B cell (primary cell): ENCODE measurements at regions of chr18 and their contacts with region 1.

Region 1: GRCh38 chr18:62714671-62715435 is 488 bp upstream of the PHLPP1 start:
- DNase-seq: peak; percentile 96
- ATAC-seq: peak; percentile 81
- H3K4me3 ChIP-seq: peak overlapping the region; percentile 6 to 85 (median 75)
- H3K4me3 Mint-ChIP-seq: peak overlapping the region; percentile 95
- H3K27ac ChIP-seq: peak overlapping the region; percentile 85 to 92
- H3K27ac Mint-ChIP-seq: peak overlapping the region; percentile 97
- H3K4me1 ChIP-seq: peaks cover 15 to 18% of the 10 kb centered on the region in 2 donors
- H3K4me1 Mint-ChIP-seq: peaks cover 34% of the 10 kb centered on the region
- H3K27me3 ChIP-seq: no peaks in the 10 kb centered on the region
- H3K27me3 Mint-ChIP-seq: no peaks in the 10 kb centered on the region
- CTCF ChIP-seq: peak; percentile 77

Region 2: DNA sequence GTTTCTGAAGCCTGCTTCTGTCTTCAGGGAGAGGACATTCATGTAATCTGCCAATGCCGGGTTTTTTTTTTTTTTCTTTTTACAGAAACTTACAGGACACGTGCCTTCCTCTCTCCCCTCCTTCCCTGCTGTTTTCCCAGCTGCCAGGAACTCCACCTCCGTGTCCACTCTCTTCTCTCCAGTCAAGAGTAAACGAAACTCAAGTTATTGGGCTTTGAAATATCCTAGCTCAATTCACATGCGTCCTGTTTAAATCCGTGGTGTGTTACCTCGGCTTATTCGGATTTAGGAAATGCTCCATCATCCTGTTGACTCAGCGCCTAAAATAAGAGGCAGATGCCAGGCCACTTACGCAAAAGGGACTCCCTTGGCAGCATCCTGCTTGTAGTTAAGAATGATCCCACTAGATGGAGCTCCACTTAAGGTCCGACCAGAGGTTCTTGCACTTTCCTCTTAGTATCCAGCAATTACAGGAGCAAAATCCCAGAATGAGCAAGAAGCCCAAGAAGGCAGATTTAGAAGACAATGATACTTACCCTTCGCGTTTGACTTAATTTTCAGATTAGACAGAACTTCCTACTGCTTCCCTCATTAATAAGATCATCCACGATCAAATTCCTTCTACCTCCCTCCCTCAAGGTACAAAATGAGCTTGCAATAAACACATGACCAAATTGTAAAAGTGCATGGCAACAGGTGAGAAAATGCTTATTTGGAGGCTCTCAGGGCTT is 289.2 kb before region 1 on chr18:
- CTCF ChIA-PET with region 1: interaction called, 4 read pairs
- POLR2A ChIA-PET with region 1: no interaction called
- intact Hi-C with region 1: loop called (anchors 2 kb)
- DNase-seq: peak; percentile 78
- ATAC-seq: peak; percentile 69
- H3K4me3 ChIP-seq: no peak overlapping the region
- H3K4me3 Mint-ChIP-seq: peak overlapping the region; percentile 29
- H3K27ac ChIP-seq: no peak overlapping the region
- H3K27ac Mint-ChIP-seq: no peak overlapping the region
- H3K4me1 ChIP-seq: peaks cover 5 to 8% of the 10 kb centered on the region in 2 donors
- H3K4me1 Mint-ChIP-seq: peaks cover 7% of the 10 kb centered on the region
- H3K27me3 ChIP-seq: peaks cover 0 to 3% (median 0%) of the 10 kb centered on the region in 4 experiments
- H3K27me3 Mint-ChIP-seq: peaks cover 9% of the 10 kb centered on the region
- CTCF ChIP-seq: peak; percentile 88

Region 3: GRCh38 chr18:62584241-62585120 is 130.4 kb before region 1 on chr18:
- CTCF ChIA-PET with region 1: interaction called, 3 read pairs
- POLR2A ChIA-PET with region 1: interaction called, 3 read pairs
- intact Hi-C with region 1: loop called (anchors 10 kb)
- DNase-seq: peak; percentile 88
- ATAC-seq: peak; percentile 94
- H3K4me3 ChIP-seq: no peak overlapping the region
- H3K4me3 Mint-ChIP-seq: peak overlapping the region; percentile 35
- H3K27ac ChIP-seq: no peak overlapping the region
- H3K27ac Mint-ChIP-seq: peak overlapping the region; percentile 11
- H3K4me1 ChIP-seq: peaks cover 13 to 20% of the 10 kb centered on the region in 2 donors
- H3K4me1 Mint-ChIP-seq: peaks cover 16% of the 10 kb centered on the region
- H3K27me3 ChIP-seq: no peaks in the 10 kb centered on the region
- H3K27me3 Mint-ChIP-seq: no peaks in the 10 kb centered on the region
- CTCF ChIP-seq: peak; percentile 94

Region 4: GRCh38 chr18:62637807-62638687 is 76.8 kb before region 1 on chr18:
- CTCF ChIA-PET with region 1: no interaction called
- POLR2A ChIA-PET with region 1: no interaction called
- intact Hi-C with region 1: no loop called
- DNase-seq: peak; percentile 60
- ATAC-seq: peak; percentile 53
- H3K4me3 ChIP-seq: no peak overlapping the region
- H3K4me3 Mint-ChIP-seq: no peak overlapping the region
- H3K27ac ChIP-seq: no peak overlapping the region
- H3K27ac Mint-ChIP-seq: no peak overlapping the region
- H3K4me1 ChIP-seq: no peaks in the 10 kb centered on the region
- H3K4me1 Mint-ChIP-seq: no peaks in the 10 kb centered on the region
- H3K27me3 ChIP-seq: no peaks in the 10 kb centered on the region
- H3K27me3 Mint-ChIP-seq: peaks cover 15% of the 10 kb centered on the region
- CTCF ChIP-seq: peak; percentile 70

Region 5: GRCh38 chr18:62877411-62878221 is 162.8 kb after region 1 on chr18:
- CTCF ChIA-PET with region 1: no interaction called
- POLR2A ChIA-PET with region 1: no interaction called
- intact Hi-C with region 1: loop called (anchors 10 kb)
- DNase-seq: no peak
- ATAC-seq: no peak
- H3K4me3 ChIP-seq: no peak overlapping the region
- H3K4me3 Mint-ChIP-seq: no peak overlapping the region
- H3K27ac ChIP-seq: no peak overlapping the region
- H3K27ac Mint-ChIP-seq: no peak overlapping the region
- H3K4me1 ChIP-seq: no peaks in the 10 kb centered on the region
- H3K4me1 Mint-ChIP-seq: peaks cover 2% of the 10 kb centered on the region
- H3K27me3 ChIP-seq: no peaks in the 10 kb centered on the region
- H3K27me3 Mint-ChIP-seq: no peaks in the 10 kb centered on the region
- CTCF ChIP-seq: no peak

Region 6: GRCh38 chr18:63161761-63162195 is 446.9 kb after region 1 on chr18:
- CTCF ChIA-PET with region 1: interaction called, 3 read pairs
- POLR2A ChIA-PET with region 1: no interaction called
- intact Hi-C with region 1: loop called (anchors 5 kb)
- DNase-seq: peak; percentile 80
- ATAC-seq: peak; percentile 56
- H3K4me3 ChIP-seq: peak overlapping the region in 1 of 5 experiments; percentile 43
- H3K4me3 Mint-ChIP-seq: peak overlapping the region; percentile 79
- H3K27ac ChIP-seq: peak overlapping the region; percentile 89 to 97
- H3K27ac Mint-ChIP-seq: peak overlapping the region; percentile 96
- H3K4me1 ChIP-seq: peaks cover 77 to 79% of the 10 kb centered on the region in 2 donors
- H3K4me1 Mint-ChIP-seq: peaks cover 88% of the 10 kb centered on the region
- H3K27me3 ChIP-seq: no peaks in the 10 kb centered on the region
- H3K27me3 Mint-ChIP-seq: no peaks in the 10 kb centered on the region
- CTCF ChIP-seq: no peak

Region 7: DNA sequence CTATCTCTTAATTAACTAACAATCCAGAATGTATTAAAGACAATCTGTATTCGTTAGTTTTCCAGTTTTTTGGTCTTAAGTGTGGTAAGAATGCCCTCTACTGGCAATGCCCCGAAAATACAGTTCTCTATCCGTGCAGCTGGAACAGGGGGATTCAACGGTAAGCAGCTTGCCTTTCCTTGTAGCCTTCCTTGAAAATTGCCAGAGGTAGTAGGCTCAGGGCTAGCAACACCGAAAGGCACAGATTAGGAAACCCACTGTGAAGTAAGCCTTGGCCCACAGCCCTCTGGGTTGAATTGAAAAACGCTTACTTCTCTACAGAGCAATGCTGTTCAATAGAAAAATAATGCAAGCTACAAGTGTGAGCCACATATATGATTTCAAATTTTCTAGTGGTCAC is 724.5 kb after region 1 on chr18:
- CTCF ChIA-PET with region 1: interaction called, 10 read pairs
- POLR2A ChIA-PET with region 1: no interaction called
- intact Hi-C with region 1: loop called (anchors 1 kb)
- DNase-seq: peak; percentile 72
- ATAC-seq: peak; percentile 78
- H3K4me3 ChIP-seq: no peak overlapping the region
- H3K4me3 Mint-ChIP-seq: no peak overlapping the region
- H3K27ac ChIP-seq: no peak overlapping the region
- H3K27ac Mint-ChIP-seq: no peak overlapping the region
- H3K4me1 ChIP-seq: peaks cover 2 to 5% of the 10 kb centered on the region in 2 donors
- H3K4me1 Mint-ChIP-seq: peaks cover 5% of the 10 kb centered on the region
- H3K27me3 ChIP-seq: no peaks in the 10 kb centered on the region
- H3K27me3 Mint-ChIP-seq: peaks cover 16% of the 10 kb centered on the region
- CTCF ChIP-seq: peak; percentile 94